Right ventricle myocardium inferior (tissue), 1 donor: ENCODE measurements at regions of chr12 and their contacts with region 1.

Region 1: DNA sequence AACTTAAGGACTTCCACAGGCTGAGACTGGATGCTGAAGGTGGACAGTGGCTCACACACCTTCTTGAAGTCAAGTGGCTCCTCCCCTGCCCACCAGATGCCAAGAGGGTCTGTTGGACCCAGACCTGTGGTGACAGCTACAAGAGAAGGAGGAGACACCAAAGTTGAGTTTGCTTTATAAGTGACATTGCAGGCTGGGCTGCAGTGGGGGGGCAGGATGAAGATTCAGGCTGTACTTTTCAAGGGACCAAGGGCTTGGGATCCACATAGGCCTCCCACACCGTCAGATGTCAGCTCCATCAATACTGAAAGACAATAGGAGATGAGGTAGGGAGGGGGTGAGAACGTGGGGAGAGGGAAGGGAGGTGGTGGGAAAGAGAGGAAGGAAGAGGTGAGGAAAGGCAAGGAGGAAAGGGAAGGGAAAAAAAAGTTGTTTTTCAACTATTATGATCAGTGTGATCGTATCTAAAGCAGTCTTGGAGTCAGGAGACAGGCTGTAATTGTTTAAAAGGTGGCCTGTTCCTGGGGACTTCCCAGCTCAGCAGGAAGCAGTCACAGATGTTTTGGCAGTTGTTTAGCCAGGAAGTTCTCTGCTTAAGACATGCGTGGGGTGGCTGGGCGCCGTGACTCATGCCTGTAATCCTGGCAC is 84.1 kb upstream of the RESF1 start:
- DNase-seq: peak; percentile 76
- ATAC-seq: peak; percentile 59

Region 2: DNA sequence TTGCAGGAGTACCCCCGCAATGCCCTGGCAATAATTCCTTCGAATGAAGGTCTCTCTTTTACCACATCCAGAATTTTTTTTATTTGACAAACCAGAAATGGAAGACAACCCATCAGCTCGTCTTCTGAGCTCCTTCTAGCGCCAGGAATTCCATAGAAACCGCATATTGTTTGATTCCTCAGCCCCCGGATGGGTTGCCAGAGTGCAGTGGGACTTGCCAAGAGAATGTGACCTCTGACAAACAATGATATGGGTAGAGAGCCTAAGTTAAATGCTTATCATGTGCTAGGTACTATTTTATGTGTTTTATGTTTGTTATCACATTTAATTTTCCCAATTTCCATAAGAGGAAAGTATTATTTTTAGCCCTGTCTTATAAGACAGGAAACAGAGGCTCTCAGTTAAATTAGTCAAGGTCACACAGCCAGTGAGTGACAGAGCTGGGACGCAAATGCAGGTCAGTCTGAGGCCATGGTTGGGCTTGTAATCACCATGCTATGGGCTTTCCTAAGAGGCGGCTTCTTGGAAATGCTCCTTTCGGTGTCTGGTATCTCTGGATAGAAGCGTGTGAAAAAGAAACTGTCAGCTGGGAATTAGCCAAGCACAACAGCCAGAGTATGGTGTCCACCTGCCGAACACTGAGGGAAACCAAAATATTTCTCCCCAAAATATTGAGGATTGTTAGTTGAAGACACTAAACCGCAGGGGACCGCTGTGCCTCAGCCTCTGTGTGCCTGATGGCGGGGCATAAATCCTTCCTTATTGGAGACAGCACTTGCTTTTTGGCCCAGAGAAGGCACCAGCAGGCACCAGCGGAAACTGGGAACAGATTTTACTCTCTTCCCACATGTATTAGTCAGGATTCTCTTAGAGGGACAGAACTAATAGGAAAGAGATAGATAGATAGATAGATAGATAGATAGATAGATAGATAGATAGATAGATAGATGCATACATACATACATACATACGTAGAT is 245.0 kb before region 1 on chr12:
- intact Hi-C with region 1: no loop called
- DNase-seq: no peak
- ATAC-seq: peak; percentile 94

Region 3: GRCh38 chr12:31728917-31729640 is 146.0 kb before region 1 on chr12 and contains the start of gene AMN1:
- intact Hi-C with region 1: loop called (anchors 5 kb)
- DNase-seq: peak; percentile 100
- ATAC-seq: peak; percentile 99
- total RNA-seq, gene AMN1: 11.5 TPM

Region 4: GRCh38 chr12:31819427-31819826 is 55.7 kb before region 1 on chr12:
- intact Hi-C with region 1: loop called (anchors 5 kb)
- DNase-seq: no peak
- ATAC-seq: no peak

Region 5: GRCh38 chr12:31832740-31833729 is 42.0 kb before region 1 on chr12:
- intact Hi-C with region 1: no loop called
- DNase-seq: no peak
- ATAC-seq: peak; percentile 60

Region 6: GRCh38 chr12:31944299-31944698 is 69.2 kb after region 1 on chr12:
- intact Hi-C with region 1: no loop called
- DNase-seq: no peak
- ATAC-seq: no peak